GM13976 (cell line): ENCODE measurements at regions of chr9 and their contacts with region 1.

Region 1: DNA sequence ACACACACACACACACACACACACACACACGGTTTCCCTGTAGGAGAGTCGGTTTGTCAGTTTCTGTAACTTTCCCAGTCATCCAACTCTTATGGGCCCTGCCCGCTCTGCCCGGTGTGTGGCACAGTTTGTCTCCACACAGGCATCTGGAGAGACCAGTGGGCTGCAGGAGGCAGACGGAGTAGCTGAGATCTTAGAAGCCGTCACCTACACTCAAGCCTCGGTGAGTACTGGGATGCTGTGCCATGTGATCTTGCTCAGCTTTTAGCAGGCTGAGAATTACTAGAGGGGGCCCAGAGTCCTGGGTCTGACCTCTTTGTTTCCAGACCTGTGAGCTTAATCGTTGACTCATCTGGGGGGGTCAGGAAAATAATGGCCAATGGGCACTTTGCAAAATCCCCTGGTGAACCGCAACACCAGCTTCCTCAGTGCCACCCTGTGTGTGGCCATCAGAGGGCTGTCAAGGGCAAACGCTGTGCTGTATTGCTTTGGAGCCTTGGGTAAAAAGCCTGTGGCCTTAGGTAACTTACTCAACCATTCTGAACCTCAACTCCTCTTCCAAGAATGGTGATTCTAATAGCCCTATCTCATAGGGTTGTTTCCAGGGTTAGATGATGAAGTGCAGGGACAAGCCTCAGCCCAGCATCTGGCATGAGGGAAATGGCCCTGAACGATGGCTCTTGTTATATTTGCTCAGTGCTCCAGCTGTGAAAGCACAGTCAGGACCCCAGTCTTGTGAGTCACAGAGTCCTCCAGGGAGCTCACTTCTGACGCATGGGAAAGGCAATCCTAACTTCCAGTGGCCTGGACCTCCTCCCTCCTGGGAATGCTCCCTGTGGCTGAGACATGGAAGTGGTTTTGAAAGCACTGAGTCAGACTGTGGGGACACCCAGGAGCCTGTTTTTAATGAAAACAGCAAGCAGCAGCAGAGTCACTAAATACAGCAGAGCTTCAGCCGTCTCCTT is 45.6 kb downstream of the COL15A1 start:
- DNase-seq: no peak
- CTCF ChIP-seq: no peak

Region 2: DNA sequence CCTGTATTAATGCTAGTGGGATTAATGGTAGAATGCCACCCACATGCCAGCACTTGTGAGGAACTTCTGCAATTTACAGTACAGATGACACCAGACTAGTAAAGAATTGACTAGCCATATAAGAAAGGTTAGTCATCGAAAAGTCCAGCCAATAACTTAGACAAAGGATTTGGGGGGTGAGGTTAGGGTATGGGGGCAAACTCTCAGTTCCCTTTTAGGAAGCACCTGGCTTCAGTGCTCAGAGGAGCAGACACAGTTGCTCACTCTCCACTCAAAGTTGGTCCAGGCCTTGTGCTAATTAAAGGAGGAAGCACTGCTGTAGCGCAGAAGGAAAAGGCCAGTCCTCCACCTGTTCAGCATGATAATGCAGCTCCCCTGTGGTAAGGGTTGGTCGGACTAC is 140.8 kb after region 1 on chr9:
- in situ Hi-C with region 1: loop called (anchors 10 kb)
- DNase-seq: peak; percentile 32
- CTCF ChIP-seq: no peak

Region 3: DNA sequence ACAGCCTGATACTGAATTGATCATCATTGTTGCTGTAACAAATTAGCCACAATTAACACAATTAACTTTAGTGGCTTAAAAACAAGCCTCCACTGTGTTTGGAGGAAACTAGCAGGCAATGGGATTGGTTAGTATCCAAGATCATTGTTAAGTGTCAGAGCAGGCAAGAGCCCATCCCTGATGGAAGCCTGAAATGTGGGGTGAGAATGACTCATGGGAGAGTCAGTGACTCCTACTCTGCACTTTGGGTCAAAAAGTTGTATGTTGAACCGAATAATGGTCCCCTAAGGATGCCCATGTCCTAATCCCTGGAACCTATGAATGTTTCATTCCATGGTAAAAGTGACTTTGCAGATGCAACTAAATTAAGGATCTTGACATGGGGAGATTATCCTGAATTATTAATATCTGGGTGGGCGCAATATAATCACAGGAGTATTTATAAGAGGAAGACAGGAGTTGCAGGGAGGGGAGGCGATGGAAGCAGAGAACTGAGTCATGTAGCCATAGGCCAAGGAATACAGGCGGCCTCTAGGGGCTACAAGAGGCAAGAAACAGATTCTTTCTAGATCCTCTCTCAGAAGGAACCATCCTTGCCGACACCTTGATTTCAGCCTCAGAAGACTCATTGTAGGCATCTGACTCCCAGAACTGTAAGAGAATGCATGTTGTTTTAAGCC is 203.6 kb after region 1 on chr9:
- in situ Hi-C with region 1: no loop called
- DNase-seq: no peak
- CTCF ChIP-seq: no peak